ENCODE measurements at regions of chr16 and their contacts with region 1.

Region 1: DNA sequence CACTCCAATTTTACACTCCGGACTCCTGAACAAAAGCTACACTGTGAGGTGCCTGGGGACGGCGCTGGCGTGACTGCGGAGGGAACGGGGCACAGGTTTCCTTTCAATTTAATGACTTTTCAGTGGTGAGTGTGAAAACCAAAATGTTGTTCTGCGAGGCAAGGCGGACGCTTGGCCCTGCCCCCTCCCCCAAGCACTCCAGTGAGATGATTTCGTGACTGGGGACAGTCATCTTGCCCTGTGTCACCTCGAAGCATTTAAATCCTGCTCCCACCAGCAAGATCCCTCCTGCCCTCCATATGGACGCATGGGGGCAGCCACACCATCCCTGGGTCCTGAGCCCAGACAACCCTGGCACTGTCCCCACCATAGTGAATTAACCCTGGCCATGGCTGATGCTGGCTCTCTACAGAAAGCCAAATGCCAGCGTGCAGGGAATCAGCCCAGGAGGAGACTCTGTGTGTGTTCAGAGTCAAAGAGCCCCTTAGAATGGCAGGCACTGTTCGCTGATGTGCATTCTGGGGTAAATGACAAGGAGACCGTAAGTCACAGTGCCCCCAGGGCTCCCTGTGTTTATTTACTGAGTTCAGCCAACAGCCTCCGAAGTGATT is 41.0 kb downstream of the C16orf95 start:
- DNase-seq: no peak
- H3K4me3 Mint-ChIP-seq: no peak overlapping the region
- H3K27ac Mint-ChIP-seq: no peak overlapping the region
- H3K4me1 Mint-ChIP-seq: peaks cover 20% of the 10 kb centered on the region
- H3K27me3 Mint-ChIP-seq: no peaks in the 10 kb centered on the region

Region 2: GRCh38 chr16:87203060-87203656 is 73.0 kb before region 1 on chr16:
- CTCF ChIA-PET with region 1: interaction called, 11 read pairs
- POLR2A ChIA-PET with region 1: no interaction called
- DNase-seq: peak; percentile 45
- H3K4me3 Mint-ChIP-seq: no peak overlapping the region
- H3K27ac Mint-ChIP-seq: no peak overlapping the region
- H3K4me1 Mint-ChIP-seq: no peaks in the 10 kb centered on the region
- H3K27me3 Mint-ChIP-seq: peaks cover 6% of the 10 kb centered on the region